ENCODE measurements at regions of chr21 and their contacts with region 1.

Region 1: DNA sequence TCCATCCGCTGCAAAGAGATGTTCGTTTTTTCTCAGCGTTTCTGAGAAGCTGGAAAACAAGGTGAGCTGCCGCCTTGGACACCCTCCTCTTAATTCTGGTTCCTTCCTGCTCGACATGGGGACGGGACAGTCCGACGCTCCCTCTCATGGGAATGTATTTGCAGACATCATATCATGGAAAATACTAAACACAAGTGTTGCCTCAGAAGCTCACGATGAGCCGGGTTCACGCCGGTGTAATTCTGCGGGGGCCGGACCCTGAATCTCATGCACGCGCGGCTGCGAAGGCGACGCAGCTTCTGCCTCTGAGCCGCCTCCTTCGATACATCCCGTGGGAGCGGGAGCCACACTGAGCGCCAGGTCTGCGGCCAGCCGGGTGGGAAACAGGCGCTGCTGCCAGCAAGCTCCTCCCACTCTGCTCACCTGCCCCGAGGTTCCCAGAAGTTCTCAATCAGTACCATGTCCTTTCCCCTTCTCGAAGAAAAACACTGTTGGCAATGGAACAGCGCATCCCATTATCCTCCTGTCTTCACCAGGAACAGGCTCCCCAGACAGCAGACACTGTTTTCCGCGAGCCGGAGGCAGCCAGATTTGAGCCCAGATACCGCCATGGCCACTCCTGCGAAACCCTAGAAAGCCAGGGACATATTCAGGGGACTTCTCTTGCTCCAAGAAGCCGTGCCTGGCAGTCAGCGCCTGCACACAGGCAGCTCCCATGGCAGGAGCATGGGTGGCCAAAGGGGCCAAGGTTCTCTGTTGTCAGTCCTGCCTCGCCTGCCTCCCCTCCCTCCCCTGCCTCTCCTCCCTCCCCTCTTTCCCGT is 98.0 kb downstream of the WDR4 start:
- DNase-seq: peak in 2 of 5 donors; percentile 27 to 47
- ATAC-seq: peak in 2 of 4 donors; percentile 14 to 19
- H3K4me3 ChIP-seq: peak overlapping the region in 8 of 12 donors; percentile 22 to 43 (median 35)
- H3K27ac ChIP-seq: peak overlapping the region in 6 of 12 donors; percentile 26 to 93 (median 45)
- H3K4me1 ChIP-seq: peaks cover 0 to 33% (median 24%) of the 10 kb centered on the region in 12 donors
- H3K27me3 ChIP-seq: peaks cover 0 to 29% (median 10%) of the 10 kb centered on the region in 9 donors
- CTCF ChIP-seq: peak in 2 of 12 donors; percentile 11 to 14
- POLR2A ChIP-seq: no peak

Region 2: DNA sequence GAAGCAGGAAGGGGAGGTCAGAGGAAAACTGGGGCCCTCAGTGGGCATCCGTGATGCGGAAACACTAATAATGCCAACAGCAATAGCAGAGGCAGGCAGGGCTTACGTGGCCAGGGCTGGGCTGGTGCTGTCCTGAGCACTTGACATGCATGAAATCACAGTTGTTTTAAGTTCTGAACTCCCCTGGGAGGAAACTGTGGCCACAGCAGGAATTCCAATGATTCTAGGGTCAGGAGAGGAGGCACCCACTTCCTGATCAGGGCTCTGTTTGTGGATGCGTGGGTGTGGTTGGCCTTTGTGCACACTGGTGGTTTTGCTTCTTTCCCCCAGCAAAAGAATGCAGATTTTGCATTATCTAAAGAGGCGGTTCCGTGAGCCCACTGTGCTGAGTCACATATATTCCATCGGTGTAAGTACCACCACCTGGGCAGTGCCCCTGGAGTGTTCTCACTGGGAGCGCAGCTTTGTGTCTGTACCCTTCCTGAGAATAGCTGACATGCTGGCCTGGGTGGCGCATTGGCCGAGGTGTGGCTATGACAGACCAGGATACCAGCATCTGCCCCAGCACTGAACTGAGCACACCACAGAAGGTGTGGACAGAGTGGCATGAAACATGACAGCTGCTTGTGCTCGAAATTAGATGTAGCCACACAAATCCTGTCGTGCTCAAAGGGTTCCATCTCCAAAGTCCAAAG is 57.0 kb before region 1 on chr21:
- intact Hi-C with region 1: loop called in 1 of 10 experiments (anchors 5 kb)
- DNase-seq: peak in 3 of 5 donors; percentile 42 to 64 (median 53)
- ATAC-seq: peak in 3 of 4 donors; percentile 77 to 80 (median 79)
- H3K4me3 ChIP-seq: no peak overlapping the region
- H3K27ac ChIP-seq: peak overlapping the region in 11 of 12 donors; percentile 12 to 81 (median 45)
- H3K4me1 ChIP-seq: peaks cover 0 to 42% (median 35%) of the 10 kb centered on the region in 12 donors
- H3K27me3 ChIP-seq: no peaks in the 10 kb centered on the region
- CTCF ChIP-seq: no peak
- POLR2A ChIP-seq: no peak